ENCODE measurements at regions of chr9 and their contacts with region 1.

Region 1: GRCh38 chr9:130866474-130866965 is 30.1 kb downstream of the QRFP start:
- DNase-seq: peak; percentile 32 to 64
- ATAC-seq: peak; percentile 70 to 86
- H3K4me3 ChIP-seq: no peak overlapping the region
- H3K27ac ChIP-seq: no peak overlapping the region
- H3K4me1 ChIP-seq: peaks cover 2 to 13% of the 10 kb centered on the region in 2 donors
- H3K27me3 ChIP-seq: no peaks in the 10 kb centered on the region
- CTCF ChIP-seq: peak; percentile 55 to 78 (median 64)
- POLR2A ChIP-seq: no peak

Region 2: GRCh38 chr9:130707225-130707976 is 159.1 kb before region 1 on chr9:
- in situ Hi-C with region 1: loop called (anchors 5 to 10 kb)
- intact Hi-C with region 1: loop called (anchors 2 kb)
- DNase-seq: no peak
- ATAC-seq: peak; percentile 24 to 25
- H3K4me3 ChIP-seq: no peak overlapping the region
- H3K27ac ChIP-seq: no peak overlapping the region
- H3K4me1 ChIP-seq: peaks cover 0 to 3% of the 10 kb centered on the region in 2 donors
- H3K27me3 ChIP-seq: no peaks in the 10 kb centered on the region
- CTCF ChIP-seq: peak; percentile 63 to 84 (median 69)
- POLR2A ChIP-seq: no peak

Region 3: GRCh38 chr9:130997925-130998596 is 131.5 kb after region 1 on chr9:
- in situ Hi-C with region 1: no loop called
- intact Hi-C with region 1: loop called (anchors 1 kb)
- DNase-seq: peak in 1 of 2 donors; percentile 21
- ATAC-seq: no peak
- H3K4me3 ChIP-seq: no peak overlapping the region
- H3K27ac ChIP-seq: no peak overlapping the region
- H3K4me1 ChIP-seq: no peaks in the 10 kb centered on the region
- H3K27me3 ChIP-seq: peaks cover 23 to 35% (median 35%) of the 10 kb centered on the region in 3 donors
- CTCF ChIP-seq: peak in 4 of 5 experiments; percentile 40 to 58 (median 50)
- POLR2A ChIP-seq: no peak

Region 4: GRCh38 chr9:131046581-131047202 is 180.2 kb after region 1 on chr9:
- in situ Hi-C with region 1: no loop called
- intact Hi-C with region 1: loop called (anchors 5 kb)
- DNase-seq: no peak
- ATAC-seq: peak; percentile 69
- H3K4me3 ChIP-seq: no peak overlapping the region
- H3K27ac ChIP-seq: no peak overlapping the region
- H3K4me1 ChIP-seq: no peaks in the 10 kb centered on the region
- H3K27me3 ChIP-seq: no peaks in the 10 kb centered on the region
- CTCF ChIP-seq: peak; percentile 59 to 90 (median 79)
- POLR2A ChIP-seq: no peak

Region 5: DNA sequence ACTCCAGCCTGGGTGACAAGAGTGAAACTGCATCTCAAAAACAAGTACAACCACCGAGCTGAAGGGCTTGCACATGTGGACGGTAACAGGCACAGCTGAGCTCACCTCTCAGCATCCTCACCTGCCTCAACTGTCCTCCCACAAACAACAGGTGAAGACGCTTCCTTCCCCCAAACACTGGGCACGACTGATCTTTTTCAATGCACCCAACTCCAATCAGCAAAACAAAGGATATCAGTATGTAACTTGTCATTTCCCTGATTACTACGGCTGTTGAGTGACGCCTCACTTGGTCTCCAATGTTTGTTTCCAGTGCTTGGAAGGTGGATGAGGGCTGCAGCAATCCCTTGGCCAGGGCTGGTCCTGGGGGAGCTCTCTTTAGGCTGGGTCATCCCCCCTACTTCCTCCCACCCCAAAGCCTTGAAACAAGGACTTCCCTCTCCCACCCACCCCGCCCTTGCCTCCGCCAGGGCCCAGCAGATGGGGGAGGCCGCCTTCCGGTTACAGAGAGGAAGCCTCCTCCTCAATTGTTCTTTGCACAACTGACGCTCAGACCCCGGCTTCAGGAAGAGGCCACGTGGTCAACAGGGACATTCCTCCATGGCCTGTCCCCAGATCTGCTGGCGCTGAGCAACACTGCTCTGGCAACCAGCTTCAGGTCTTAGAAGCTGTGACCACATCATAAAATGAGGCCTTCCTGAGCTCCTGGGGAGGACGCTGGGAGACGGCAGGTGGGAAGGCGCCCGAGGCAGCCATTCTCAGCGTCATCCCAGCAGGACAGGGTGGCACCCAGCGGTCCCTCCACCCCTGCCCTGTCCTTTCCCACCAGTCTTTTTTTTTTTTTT is 403.9 kb after region 1 on chr9:
- in situ Hi-C with region 1: no loop called
- intact Hi-C with region 1: no loop called
- DNase-seq: peak; percentile 74 to 82
- ATAC-seq: peak; percentile 18 to 21
- H3K4me3 ChIP-seq: peak overlapping the region in 1 of 4 donors; percentile 19
- H3K27ac ChIP-seq: peak overlapping the region; percentile 94 to 100 (median 98)
- H3K4me1 ChIP-seq: peaks cover 79 to 89% of the 10 kb centered on the region in 2 donors
- H3K27me3 ChIP-seq: no peaks in the 10 kb centered on the region
- CTCF ChIP-seq: no peak
- POLR2A ChIP-seq: peak; percentile 8 to 25

Measured in gastrocnemius medialis (tissue), 4 donors.